ENCODE measurements at regions of chr5 and their contacts with region 1.

Region 1: GRCh38 chr5:16690243-16690852 is 73.6 kb upstream of the RETREG1 start:
- DNase-seq: peak in 1 of 2 experiments; percentile 66
- H3K4me3 ChIP-seq: no peak overlapping the region
- H3K27ac ChIP-seq: no peak overlapping the region
- H3K4me1 ChIP-seq: 0 out of 7 replicates have a peak, but pooled peaks cover 0 to 2% (median 0%) of the 10 kb centered on the region in 4 experiments
- H3K27me3 ChIP-seq: no peaks in the 10 kb centered on the region
- CTCF ChIP-seq: peak; percentile 71 to 88 (median 81)
- EP300 ChIP-seq: no peak
- POLR2A ChIP-seq: no peak
- RAD21 ChIP-seq: peak; percentile 73 to 81

Region 2: GRCh38 chr5:16539169-16539721 is 151.1 kb before region 1 on chr5:
- CTCF ChIA-PET with region 1: no interaction called
- POLR2A ChIA-PET with region 1: no interaction called
- DNase-seq: no peak
- H3K4me3 ChIP-seq: no peak overlapping the region
- H3K27ac ChIP-seq: no peak overlapping the region
- H3K4me1 ChIP-seq: no peaks in the 10 kb centered on the region
- H3K27me3 ChIP-seq: no peaks in the 10 kb centered on the region
- CTCF ChIP-seq: no peak
- EP300 ChIP-seq: no peak
- POLR2A ChIP-seq: no peak
- RAD21 ChIP-seq: no peak

Region 3: DNA sequence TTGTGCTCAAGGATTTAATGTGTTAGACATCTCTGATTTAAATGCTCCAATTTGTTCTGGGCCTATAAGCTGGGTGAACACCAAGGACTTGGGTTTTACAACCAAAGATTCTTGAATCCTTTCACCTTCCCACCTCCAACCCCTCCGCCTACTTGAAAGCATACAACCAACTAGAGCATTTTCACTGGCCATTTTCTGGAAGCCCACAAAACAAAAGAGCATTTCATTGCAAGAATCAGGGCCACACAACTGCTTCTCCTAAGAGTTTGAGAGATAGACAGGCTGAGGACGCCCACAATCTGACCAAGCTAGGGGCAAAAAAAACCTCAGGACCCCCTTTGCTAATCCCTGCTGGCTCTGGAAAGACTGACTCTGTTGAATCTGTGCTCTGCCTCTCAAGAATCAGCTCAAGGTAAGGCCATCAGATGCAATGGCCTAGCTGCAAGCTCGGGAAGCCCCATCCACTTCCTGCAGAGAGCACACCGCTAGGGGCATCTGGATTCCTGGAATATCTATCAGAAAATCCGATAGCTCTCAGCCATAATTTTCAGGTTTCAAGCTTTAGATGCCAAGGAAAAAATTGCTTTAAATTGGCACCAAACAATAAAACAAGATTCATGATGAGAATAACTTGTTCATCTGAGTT is 131.2 kb before region 1 on chr5:
- CTCF ChIA-PET with region 1: no interaction called
- POLR2A ChIA-PET with region 1: no interaction called
- DNase-seq: no peak
- H3K4me3 ChIP-seq: no peak overlapping the region
- H3K27ac ChIP-seq: no peak overlapping the region
- H3K4me1 ChIP-seq: peaks cover 0 to 4% (median 0%) of the 10 kb centered on the region in 4 experiments; a peak in 2 of 7 replicates
- H3K27me3 ChIP-seq: no peaks in the 10 kb centered on the region
- CTCF ChIP-seq: no peak
- EP300 ChIP-seq: no peak
- POLR2A ChIP-seq: no peak
- RAD21 ChIP-seq: no peak

Region 4: GRCh38 chr5:16666883-16667398 is 23.4 kb before region 1 on chr5:
- CTCF ChIA-PET with region 1: interaction called, 51 read pairs
- POLR2A ChIA-PET with region 1: interaction called, 3 read pairs
- DNase-seq: no peak
- H3K4me3 ChIP-seq: no peak overlapping the region
- H3K27ac ChIP-seq: no peak overlapping the region
- H3K4me1 ChIP-seq: no peaks in the 10 kb centered on the region
- H3K27me3 ChIP-seq: no peaks in the 10 kb centered on the region
- CTCF ChIP-seq: peak; percentile 18 to 59 (median 36)
- EP300 ChIP-seq: no peak
- POLR2A ChIP-seq: 0 out of 3 replicates have a peak, but pooled peaks of 1 of the 2 experiments have one; percentile 18
- RAD21 ChIP-seq: peak; percentile 55 to 62

Region 5: GRCh38 chr5:16679863-16680262 is 10.5 kb before region 1 on chr5:
- CTCF ChIA-PET with region 1: interaction called, 51 read pairs
- POLR2A ChIA-PET with region 1: interaction called, 3 read pairs
- DNase-seq: peak in 1 of 2 experiments; percentile 65
- H3K4me3 ChIP-seq: no peak overlapping the region
- H3K27ac ChIP-seq: no peak overlapping the region
- H3K4me1 ChIP-seq: no peaks in the 10 kb centered on the region
- H3K27me3 ChIP-seq: no peaks in the 10 kb centered on the region
- CTCF ChIP-seq: peak; percentile 36 to 67 (median 61)
- EP300 ChIP-seq: no peak
- POLR2A ChIP-seq: no peak
- RAD21 ChIP-seq: peak; percentile 49 to 52

Region 6: DNA sequence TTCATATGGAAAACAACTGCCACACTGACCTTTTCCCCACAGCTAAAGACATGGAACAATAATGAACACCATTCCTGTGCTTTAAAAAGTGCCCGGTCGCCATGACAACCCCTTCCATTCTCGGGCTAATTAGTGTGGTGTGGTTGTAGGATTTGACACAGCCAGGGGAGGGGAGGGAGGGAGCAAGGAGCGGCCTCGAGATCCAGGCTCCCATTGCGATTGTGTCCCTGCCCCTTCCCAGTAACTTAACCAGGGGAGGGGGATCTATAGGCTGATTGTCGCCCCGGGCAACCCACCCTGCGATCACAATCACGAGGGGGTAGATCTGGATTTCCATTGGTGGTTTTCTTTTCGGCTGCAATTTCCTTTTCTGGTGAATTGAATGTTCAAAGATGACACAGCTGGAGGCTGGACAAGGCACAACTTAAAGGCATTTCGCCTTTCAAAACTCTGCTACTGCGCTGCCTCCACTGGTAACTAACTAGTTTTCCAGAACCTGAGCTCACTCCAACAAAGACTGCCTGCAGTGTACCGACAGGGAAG is 23.1 kb after region 1 on chr5:
- CTCF ChIA-PET with region 1: interaction called, 14 read pairs
- POLR2A ChIA-PET with region 1: interaction called, 4 read pairs
- DNase-seq: peak in 1 of 2 experiments; percentile 61
- H3K4me3 ChIP-seq: peak overlapping the region; percentile 2 to 50 (median 23); a peak in 5 of 8 replicates
- H3K27ac ChIP-seq: peak overlapping the region; percentile 71; the same call in 1 of the 2 replicates
- H3K4me1 ChIP-seq: peaks cover 2 to 24% (median 10%) of the 10 kb centered on the region in 4 experiments; a peak in 6 of 7 replicates
- H3K27me3 ChIP-seq: no peaks in the 10 kb centered on the region
- CTCF ChIP-seq: no peak
- EP300 ChIP-seq: no peak
- POLR2A ChIP-seq: no peak
- RAD21 ChIP-seq: no peak

Region 7: GRCh38 chr5:16759147-16759773 is 68.9 kb after region 1 on chr5:
- CTCF ChIA-PET with region 1: interaction called, 10 read pairs
- POLR2A ChIA-PET with region 1: no interaction called
- DNase-seq: no peak
- H3K4me3 ChIP-seq: no peak overlapping the region
- H3K27ac ChIP-seq: no peak overlapping the region; the same call in 1 of the 2 replicates
- H3K4me1 ChIP-seq: peaks cover 0 to 2% (median 1%) of the 10 kb centered on the region in 4 experiments; a peak in 2 of 7 replicates
- H3K27me3 ChIP-seq: no peaks in the 10 kb centered on the region
- CTCF ChIP-seq: no peak
- EP300 ChIP-seq: no peak
- POLR2A ChIP-seq: no peak
- RAD21 ChIP-seq: no peak